ENCODE measurements at regions of chr3 and their contacts with region 1.

Region 1: GRCh38 chr3:122942937-122943827 is 84.4 kb downstream of the SEMA5B start:
- DNase-seq: peak; percentile 64 to 83
- H3K4me3 ChIP-seq: no peak overlapping the region
- H3K27ac ChIP-seq: no peak overlapping the region
- H3K4me1 ChIP-seq: peaks cover 34% of the 10 kb centered on the region
- H3K27me3 ChIP-seq: no peaks in the 10 kb centered on the region
- CTCF ChIP-seq: peak; percentile 94

Region 2: DNA sequence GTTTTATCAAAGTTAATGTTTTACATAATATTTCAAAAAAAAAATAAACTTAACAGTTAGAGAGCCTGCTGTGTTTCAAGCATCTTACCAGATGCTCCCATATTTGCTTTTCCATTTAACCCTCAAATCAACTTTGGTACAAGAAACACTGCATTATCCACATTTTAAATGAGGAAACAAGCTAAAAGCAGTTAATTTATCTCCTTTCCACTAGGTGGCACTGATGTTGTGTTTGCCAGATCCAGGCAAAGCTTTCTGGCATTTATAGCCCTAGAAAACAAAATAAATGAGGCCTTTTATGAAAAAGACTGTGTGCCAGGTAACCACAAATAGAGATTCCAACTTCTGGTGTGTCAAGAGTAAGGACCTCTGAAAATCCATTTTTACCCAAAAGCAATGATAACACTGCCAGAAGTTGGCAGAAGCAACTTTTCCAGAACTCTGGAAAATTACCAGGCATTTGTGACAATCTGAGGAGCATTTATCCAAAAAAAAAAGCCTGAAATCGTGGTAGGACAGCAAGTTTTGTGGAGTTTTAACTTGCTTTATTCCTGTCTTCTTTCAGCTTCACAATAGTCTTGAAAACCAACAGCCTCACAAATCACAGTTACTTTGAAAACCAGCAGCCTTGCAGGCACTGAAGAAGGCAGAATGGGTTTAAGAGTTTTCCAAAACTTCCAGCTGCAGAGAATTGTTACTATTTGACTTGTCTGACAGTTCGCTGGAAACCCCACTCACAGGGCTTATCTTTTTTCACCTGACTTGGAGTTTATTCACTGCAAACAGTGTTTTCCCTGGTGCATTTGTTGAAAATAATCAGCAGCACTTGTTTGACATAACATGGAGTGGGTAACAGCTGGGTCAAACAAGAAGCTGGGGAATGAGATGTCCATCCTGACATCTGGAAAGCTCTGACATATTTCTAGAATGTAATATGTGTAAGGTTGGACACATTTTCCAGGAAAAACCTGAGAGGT is 550.0 kb before region 1 on chr3:
- CTCF ChIA-PET with region 1: interaction called, 3 read pairs
- POLR2A ChIA-PET with region 1: no interaction called
- intact Hi-C with region 1: loop called (anchors 10 kb)
- DNase-seq: peak in 1 of 2 experiments; percentile 9
- H3K4me3 ChIP-seq: no peak overlapping the region
- H3K27ac ChIP-seq: no peak overlapping the region
- H3K4me1 ChIP-seq: no peaks in the 10 kb centered on the region
- H3K27me3 ChIP-seq: no peaks in the 10 kb centered on the region
- CTCF ChIP-seq: peak; percentile 91

Region 3: DNA sequence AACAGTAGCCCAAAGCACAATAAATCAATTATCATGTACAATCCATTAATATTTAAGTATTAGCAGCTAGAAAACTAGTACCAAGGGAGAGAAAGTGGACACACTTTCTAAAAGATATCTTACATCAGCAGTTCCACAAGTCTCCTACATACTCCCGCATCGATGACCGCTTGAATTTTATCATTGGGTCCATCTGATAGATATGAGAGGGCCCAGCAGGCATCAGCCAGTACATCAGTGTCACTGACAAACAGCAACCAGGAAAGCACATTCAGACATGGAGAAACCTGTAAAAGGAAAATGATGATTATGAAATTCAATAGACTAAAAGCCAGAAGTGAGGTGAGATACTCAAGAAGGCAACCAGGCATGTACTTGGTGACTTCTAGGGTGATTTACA is 493.7 kb before region 1 on chr3:
- CTCF ChIA-PET with region 1: no interaction called
- POLR2A ChIA-PET with region 1: no interaction called
- intact Hi-C with region 1: no loop called
- DNase-seq: no peak
- H3K4me3 ChIP-seq: no peak overlapping the region
- H3K27ac ChIP-seq: no peak overlapping the region
- H3K4me1 ChIP-seq: peaks cover 9% of the 10 kb centered on the region
- H3K27me3 ChIP-seq: no peaks in the 10 kb centered on the region
- CTCF ChIP-seq: no peak

Region 4: DNA sequence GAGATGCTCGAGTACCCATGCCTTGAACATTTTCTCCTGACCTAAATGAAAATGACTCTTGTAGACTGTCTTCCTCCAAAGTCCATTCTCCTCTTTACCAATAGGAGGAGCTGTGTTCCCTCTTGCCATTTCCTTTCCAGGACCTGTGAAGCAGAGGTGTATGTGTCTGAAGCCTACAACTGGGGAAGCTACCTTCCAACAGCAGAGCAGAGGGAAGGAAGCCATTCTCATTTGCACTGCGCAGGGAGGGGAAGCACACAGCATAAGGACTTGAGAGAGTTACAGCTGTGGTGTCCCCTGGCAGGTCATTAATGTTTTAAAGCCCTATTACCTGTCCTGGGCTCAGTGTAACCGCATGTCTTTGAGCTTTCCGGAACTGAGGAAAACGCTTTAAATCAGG is 188.3 kb before region 1 on chr3:
- CTCF ChIA-PET with region 1: no interaction called
- POLR2A ChIA-PET with region 1: interaction called, 3 read pairs
- intact Hi-C with region 1: loop called (anchors 5 kb)
- DNase-seq: peak; percentile 17 to 44
- H3K4me3 ChIP-seq: no peak overlapping the region
- H3K27ac ChIP-seq: no peak overlapping the region
- H3K4me1 ChIP-seq: no peaks in the 10 kb centered on the region
- H3K27me3 ChIP-seq: no peaks in the 10 kb centered on the region
- CTCF ChIP-seq: peak; percentile 79

Region 5: DNA sequence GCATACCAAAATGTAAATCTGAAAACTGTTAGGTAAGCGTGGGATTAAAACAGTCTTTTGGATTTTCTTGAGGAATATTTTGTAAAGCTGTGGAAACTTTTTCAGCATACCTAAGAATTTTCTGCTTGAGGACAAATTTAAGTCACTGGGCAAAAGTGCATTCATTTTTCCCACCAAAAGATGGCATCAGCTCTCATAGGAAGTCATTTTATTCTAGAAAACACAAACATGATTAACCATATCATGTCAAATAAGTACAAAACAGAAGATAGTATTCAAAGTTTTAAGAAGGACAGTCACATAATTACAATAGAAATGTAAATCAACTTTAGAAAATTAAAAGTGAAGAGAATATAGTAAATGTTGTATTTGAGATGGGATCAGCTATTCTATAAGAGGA is 84.8 kb before region 1 on chr3:
- CTCF ChIA-PET with region 1: no interaction called
- POLR2A ChIA-PET with region 1: no interaction called
- intact Hi-C with region 1: loop called (anchors 2 kb)
- DNase-seq: no peak
- H3K4me3 ChIP-seq: no peak overlapping the region
- H3K27ac ChIP-seq: 0 out of 2 replicates have a peak overlapping the region, but pooled peaks have one; percentile 64
- H3K4me1 ChIP-seq: peaks cover 19% of the 10 kb centered on the region
- H3K27me3 ChIP-seq: no peaks in the 10 kb centered on the region
- CTCF ChIP-seq: peak; percentile 49; the same call in 1 of the 2 replicates

Region 6: GRCh38 chr3:123258811-123259420 is 315.7 kb after region 1 on chr3:
- CTCF ChIA-PET with region 1: interaction called, 9 read pairs
- POLR2A ChIA-PET with region 1: no interaction called
- intact Hi-C with region 1: loop called (anchors 2 kb)
- DNase-seq: peak in 1 of 2 experiments; percentile 57
- H3K4me3 ChIP-seq: no peak overlapping the region
- H3K27ac ChIP-seq: no peak overlapping the region
- H3K4me1 ChIP-seq: no peaks in the 10 kb centered on the region
- H3K27me3 ChIP-seq: no peaks in the 10 kb centered on the region
- CTCF ChIP-seq: peak; percentile 77

Region 7: GRCh38 chr3:123489400-123490004 is 546.3 kb after region 1 on chr3:
- CTCF ChIA-PET with region 1: no interaction called
- POLR2A ChIA-PET with region 1: no interaction called
- intact Hi-C with region 1: loop called (anchors 1 kb)
- DNase-seq: peak; percentile 40 to 60
- H3K4me3 ChIP-seq: no peak overlapping the region
- H3K27ac ChIP-seq: no peak overlapping the region
- H3K4me1 ChIP-seq: no peaks in the 10 kb centered on the region
- H3K27me3 ChIP-seq: no peaks in the 10 kb centered on the region
- CTCF ChIP-seq: peak; percentile 93

Region 8: DNA sequence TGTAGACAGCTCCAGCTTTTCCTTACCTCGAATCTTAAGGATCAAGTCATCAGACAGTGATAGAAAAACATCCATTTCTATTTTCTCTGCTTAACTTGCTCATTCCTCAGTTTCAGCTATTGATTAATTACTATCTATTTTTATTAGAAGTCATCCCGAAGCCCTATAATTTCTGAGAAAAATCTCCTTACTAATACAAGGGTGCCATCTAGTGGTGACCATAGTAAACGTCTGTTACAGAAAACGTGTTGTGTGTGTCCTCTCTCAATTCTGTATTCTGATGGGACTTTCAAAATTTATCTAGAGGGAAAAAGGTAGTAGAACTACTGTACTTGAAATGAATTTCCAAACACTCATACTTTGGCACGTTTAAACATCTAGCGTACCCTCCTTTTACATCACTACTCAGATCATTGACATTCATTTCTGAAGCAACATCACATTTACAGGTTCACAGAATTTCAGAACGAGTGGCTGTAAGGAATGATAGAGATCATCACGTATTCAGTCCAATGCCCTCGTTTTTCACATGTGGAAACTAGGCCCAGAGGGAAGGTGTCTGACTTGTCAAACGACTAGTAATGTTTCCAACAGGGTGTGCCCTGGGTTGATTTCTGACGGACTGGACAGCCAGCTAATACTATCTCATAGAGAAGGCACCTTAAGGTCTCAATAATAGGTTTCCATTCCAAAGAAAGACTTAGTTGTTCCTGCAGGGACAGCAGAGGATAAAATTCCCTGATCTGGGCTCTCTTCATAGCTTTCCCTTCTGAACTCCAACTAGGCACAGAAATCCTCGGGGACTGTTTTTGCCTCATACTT is 616.1 kb after region 1 on chr3:
- CTCF ChIA-PET with region 1: no interaction called
- POLR2A ChIA-PET with region 1: no interaction called
- intact Hi-C with region 1: loop called (anchors 5 kb)
- DNase-seq: no peak
- H3K4me3 ChIP-seq: no peak overlapping the region
- H3K27ac ChIP-seq: no peak overlapping the region
- H3K4me1 ChIP-seq: no peaks in the 10 kb centered on the region
- H3K27me3 ChIP-seq: no peaks in the 10 kb centered on the region
- CTCF ChIP-seq: peak; percentile 82

Measured in PC-9 (cell line).